ENCODE measurements at regions of chr16 and their contacts with region 1.

Region 1: GRCh38 chr16:55465077-55465896 is 13.7 kb upstream of the MMP2 start:
- DNase-seq: peak; percentile 93
- ATAC-seq: peak; percentile 93

Region 2: DNA sequence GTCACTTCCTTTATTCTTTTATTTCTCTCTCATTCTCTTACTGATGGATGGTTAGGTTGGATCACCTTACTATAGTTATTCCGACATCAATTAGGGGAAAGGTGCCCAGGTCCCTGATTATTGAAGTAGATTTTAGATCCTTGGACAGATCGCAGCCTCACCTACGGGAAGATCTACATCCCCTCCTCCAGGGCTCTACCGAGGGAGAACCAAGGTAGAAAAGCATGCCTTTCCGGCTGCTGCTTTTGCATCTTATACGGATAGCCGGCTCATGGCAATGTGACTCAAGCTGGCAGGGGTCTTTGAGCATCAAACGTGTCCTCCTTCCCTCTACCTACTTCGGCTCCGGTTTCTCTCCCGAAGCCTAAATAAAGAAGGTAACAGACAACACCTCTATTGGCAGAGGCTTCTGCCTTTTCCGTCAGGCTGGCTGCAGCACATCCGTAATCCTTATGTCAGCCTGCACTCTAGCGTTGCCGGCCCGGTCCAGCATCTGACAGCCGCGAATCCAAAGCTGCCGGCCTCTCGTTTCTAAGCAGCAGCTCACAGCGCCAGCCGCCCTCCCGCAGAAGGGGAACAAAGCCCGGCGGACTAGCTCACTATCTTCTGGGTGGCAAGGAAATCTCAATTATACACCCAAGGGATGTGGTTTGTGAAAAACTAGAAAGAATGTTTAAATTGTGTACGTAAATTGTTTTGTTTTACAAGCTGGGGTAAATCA is 94.4 kb before region 1 on chr16:
- intact Hi-C with region 1: no loop called
- DNase-seq: peak; percentile 85
- ATAC-seq: peak; percentile 81

Region 3: GRCh38 chr16:55543472-55543871 is 78.2 kb after region 1 on chr16:
- intact Hi-C with region 1: loop called (anchors 2 kb)
- DNase-seq: no peak
- ATAC-seq: peak; percentile 54

Region 4: GRCh38 chr16:55701442-55702319 is 236.4 kb after region 1 on chr16:
- intact Hi-C with region 1: loop called (anchors 5 kb)
- DNase-seq: peak; percentile 75
- ATAC-seq: peak; percentile 79

Region 5: GRCh38 chr16:55842369-55843104 is 377.2 kb after region 1 on chr16:
- intact Hi-C with region 1: loop called (anchors 10 kb)
- DNase-seq: no peak
- ATAC-seq: peak; percentile 67

Measured in left ventricle myocardium superior (tissue), 1 donor.